ENCODE measurements at regions of chr2 and their contacts with region 1.

Region 1: GRCh38 chr2:43461453-43462073 is 134.3 kb downstream of the THADA start:
- DNase-seq: peak in 2 of 3 donors; percentile 26 to 50
- H3K4me3 ChIP-seq: no peak overlapping the region
- H3K4me3 Mint-ChIP-seq: no peak overlapping the region
- H3K27ac ChIP-seq: peak overlapping the region in 1 of 2 donors; percentile 82
- H3K27ac Mint-ChIP-seq: peak overlapping the region; percentile 66 to 91 (median 86)
- H3K4me1 ChIP-seq: peaks cover 45 to 65% of the 10 kb centered on the region in 2 donors
- H3K4me1 Mint-ChIP-seq: peaks cover 60% of the 10 kb centered on the region
- H3K27me3 ChIP-seq: no peaks in the 10 kb centered on the region
- H3K27me3 Mint-ChIP-seq: peaks cover 0 to 2% (median 0%) of the 10 kb centered on the region in 3 donors
- CTCF ChIP-seq: no peak

Region 2: DNA sequence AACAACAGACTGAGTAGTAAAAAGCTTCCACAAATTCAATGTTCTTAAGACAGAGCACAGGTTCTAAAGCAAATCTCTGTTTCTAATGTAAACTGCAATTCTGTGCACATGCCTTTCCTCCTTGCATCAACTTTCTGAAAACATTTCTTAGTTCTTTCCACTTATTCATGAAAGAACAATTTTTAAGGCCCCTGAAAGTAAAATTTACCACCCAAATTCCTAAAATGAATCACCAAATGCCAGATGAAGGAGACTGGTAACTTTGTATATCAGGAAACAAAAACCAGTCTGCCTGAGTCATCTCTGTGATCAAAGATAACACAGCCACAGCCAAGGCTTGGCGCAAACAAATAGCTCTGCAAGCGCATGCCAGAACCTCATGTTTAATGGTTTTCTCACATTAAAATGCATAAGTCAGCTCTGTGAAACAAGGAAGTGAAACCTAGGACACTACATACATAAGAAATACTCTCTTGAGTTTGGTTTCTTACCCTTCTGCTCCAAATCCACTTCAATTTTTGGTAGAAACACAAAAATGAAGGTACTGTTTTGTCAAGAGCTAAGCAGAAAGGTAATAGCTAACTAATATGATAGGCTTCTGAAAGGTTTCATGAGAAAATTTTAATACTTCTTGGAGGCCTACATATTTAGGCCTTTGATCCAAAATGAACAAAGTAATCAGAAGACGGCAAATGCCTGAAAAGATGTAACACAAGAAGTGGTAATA is 35.1 kb before region 1 on chr2:
- intact Hi-C with region 1: loop called in 1 of 2 experiments (anchors 5 kb)
- DNase-seq: peak; percentile 83 to 96 (median 93)
- H3K4me3 ChIP-seq: peak overlapping the region in 1 of 3 experiments; percentile 1
- H3K4me3 Mint-ChIP-seq: peak overlapping the region in 1 of 2 donors; percentile 12
- H3K27ac ChIP-seq: peak overlapping the region; percentile 74 to 85
- H3K27ac Mint-ChIP-seq: peak overlapping the region; percentile 87 to 95 (median 92)
- H3K4me1 ChIP-seq: peaks cover 33 to 39% of the 10 kb centered on the region in 2 donors
- H3K4me1 Mint-ChIP-seq: peaks cover 43% of the 10 kb centered on the region
- H3K27me3 ChIP-seq: no peaks in the 10 kb centered on the region
- H3K27me3 Mint-ChIP-seq: no peaks in the 10 kb centered on the region
- CTCF ChIP-seq: no peak

Measured in CD14-positive monocyte (primary cell).